GM13976 (cell line): ENCODE measurements at regions of chr18 and their contacts with region 1.

Region 1: DNA sequence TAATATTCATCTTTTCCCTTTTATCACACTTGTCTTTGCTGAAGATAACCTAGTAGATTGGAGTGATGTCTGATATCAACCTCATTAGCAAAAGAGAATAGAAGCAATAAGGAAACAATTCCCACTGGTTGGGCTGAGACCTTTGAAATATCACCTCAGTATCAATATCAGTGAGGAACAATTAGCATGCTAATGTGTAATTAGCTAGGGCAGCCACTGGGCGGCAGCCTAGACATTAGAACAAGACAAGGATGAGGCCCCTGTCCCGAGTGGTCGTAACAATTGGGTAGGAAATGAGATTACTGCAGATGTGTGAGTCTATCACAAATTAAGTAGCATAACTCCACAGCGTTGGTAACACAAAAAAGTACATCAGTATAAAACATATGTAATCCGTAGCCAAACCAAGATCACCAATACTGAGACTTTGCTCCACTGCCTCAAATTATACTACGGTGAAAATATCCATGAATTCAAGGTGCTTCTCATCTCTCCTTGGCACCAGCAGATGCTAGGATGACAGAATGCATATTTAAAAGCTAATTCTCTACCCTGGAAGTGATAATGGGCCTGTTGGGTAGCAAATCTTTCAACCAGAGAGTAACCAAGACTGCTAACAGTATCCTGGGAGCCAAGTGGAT is 99.1 kb downstream of the ALPK2 start:
- DNase-seq: peak; percentile 59
- CTCF ChIP-seq: peak; percentile 83

Region 2: DNA sequence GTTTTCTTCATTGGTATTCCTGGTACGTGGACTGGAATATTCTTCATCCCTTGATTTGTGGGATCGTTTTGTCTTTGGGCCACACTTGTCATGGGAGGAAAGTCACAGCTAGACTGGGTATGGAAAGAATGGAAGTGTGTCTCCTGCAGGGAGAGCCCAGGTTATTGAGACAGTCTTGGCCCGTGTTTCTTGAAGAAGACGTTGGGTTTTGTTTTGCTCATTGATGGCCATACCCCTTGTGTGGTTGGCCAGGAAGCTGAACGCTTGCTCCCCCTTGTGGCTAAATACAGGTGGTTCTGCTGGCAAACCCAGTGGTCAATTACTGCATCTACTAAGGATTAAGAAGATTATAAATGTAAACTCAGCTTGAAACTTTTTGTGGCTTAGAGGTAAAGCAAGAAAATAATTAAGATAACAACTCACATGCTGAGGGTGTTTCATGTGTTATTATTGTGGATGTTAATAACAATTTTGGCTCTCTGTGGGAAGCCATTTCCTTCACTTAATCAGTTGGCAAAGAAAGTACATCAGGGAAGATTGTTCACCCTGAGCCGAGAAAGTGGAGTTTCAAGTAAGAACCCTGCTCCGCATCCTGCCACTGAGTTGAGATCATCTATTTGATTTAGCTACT is 394.0 kb before region 1 on chr18:
- in situ Hi-C with region 1: no loop called
- DNase-seq: peak; percentile 82
- CTCF ChIP-seq: peak; percentile 62

Region 3: DNA sequence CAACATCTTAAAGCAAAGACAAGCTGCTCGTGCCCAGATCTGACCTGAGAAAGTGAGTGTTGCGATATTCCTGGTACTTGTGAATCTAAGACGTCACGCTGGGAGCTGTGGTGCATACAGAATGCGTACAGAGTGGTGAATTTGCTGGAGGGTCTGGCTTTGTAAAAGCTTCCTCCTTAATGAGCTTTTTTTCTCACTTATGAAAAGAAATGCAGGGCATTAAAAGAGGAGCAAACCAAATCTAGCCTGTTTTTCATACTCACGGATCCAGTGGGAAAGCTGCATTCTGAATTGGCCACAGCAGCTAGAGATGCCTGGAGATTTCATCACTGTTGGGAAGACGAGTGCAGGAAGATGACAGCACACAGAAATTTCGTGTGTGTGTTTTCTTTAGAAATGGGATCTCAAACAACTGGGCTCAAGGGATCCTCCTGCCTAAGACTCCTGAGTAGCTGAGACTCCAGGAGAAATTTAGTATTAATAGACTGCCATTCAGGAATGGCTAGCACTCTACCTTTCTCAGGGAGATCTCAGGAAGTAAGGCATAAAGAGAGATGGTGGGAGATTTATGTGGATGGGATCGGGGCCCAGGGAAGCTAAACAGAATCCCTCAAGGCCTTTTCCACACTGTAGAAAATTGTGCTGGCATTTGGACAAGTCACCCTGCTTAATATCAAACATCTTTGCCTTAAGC is 82.3 kb before region 1 on chr18:
- in situ Hi-C with region 1: no loop called
- DNase-seq: no peak
- CTCF ChIP-seq: no peak

Region 4: GRCh38 chr18:58649966-58650816 is 120.4 kb after region 1 on chr18:
- in situ Hi-C with region 1: loop called (anchors 10 kb)
- DNase-seq: peak; percentile 39
- CTCF ChIP-seq: no peak

Region 5: GRCh38 chr18:58761241-58761969 is 231.6 kb after region 1 on chr18:
- in situ Hi-C with region 1: loop called (anchors 5 kb)
- DNase-seq: peak; percentile 75
- CTCF ChIP-seq: no peak